Endothelial cell of umbilical vein (primary cell): ENCODE measurements at regions of chr20 and their contacts with region 1.

Region 1: DNA sequence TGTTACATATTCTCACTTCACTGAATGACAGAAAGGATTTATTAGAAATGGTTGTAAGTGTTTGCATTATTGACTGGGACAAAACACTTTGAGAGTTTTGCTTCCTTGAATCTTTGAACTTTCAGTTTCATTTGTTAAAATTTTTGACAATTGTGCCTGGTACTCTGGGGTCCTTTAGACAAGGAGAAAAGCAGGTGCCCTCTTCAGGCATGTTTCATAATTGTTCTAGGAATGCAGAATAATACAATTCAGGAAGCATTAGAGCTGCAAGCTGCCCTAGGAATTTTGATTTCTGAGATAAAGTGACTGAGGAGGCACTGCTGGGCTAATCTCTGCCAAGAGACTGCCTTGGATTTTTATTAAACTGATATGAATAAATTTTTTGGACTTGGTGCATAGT is 49.7 kb downstream of the TOP1 start:
- DNase-seq: peak; percentile 86
- H3K4me3 ChIP-seq: no peak overlapping the region
- H3K27ac ChIP-seq: no peak overlapping the region
- H3K4me1 ChIP-seq: peaks cover 64% of the 10 kb centered on the region
- H3K27me3 ChIP-seq: no peaks in the 10 kb centered on the region
- CTCF ChIP-seq: peak; percentile 49 to 52
- POLR2A ChIP-seq: peak; percentile 52

Region 2: DNA sequence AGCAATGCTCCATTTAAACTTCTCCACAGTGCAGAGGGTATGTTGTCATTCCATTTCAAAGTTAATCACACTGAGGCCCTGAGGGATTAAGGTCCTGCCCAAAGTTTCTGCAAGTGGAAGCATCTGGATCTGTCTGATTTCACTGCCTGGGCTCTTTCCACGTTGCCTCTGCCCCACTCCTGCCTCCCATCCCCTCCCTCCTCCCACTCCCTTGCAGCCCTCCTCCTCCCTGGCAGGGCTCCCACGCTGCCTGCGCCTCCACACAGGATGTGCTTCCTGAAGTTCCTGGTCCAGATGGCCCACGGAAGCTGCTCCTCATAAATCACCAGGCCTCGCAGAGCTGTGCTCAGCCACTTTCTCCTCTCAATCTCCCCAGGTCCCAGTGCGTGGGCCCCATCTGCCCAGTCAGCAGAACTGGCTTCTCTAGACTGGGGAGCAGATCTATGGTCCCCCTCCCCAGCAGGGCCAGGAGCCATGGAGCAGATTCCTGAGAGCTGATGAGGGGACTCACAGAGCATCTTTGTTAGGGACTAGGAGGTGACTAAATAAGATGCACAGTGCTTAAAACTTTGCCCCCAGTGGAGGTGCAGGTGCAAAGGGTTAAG is 323.9 kb before region 1 on chr20:
- CTCF ChIA-PET with region 1: no interaction called
- POLR2A ChIA-PET with region 1: no interaction called
- dilution Hi-C with region 1: no loop called
- intact Hi-C with region 1: loop called (anchors 10 kb)
- DNase-seq: peak; percentile 84
- H3K4me3 ChIP-seq: no peak overlapping the region
- H3K27ac ChIP-seq: no peak overlapping the region
- H3K4me1 ChIP-seq: peaks cover 22% of the 10 kb centered on the region
- H3K27me3 ChIP-seq: no peaks in the 10 kb centered on the region
- CTCF ChIP-seq: no peak
- POLR2A ChIP-seq: no peak

Region 3: DNA sequence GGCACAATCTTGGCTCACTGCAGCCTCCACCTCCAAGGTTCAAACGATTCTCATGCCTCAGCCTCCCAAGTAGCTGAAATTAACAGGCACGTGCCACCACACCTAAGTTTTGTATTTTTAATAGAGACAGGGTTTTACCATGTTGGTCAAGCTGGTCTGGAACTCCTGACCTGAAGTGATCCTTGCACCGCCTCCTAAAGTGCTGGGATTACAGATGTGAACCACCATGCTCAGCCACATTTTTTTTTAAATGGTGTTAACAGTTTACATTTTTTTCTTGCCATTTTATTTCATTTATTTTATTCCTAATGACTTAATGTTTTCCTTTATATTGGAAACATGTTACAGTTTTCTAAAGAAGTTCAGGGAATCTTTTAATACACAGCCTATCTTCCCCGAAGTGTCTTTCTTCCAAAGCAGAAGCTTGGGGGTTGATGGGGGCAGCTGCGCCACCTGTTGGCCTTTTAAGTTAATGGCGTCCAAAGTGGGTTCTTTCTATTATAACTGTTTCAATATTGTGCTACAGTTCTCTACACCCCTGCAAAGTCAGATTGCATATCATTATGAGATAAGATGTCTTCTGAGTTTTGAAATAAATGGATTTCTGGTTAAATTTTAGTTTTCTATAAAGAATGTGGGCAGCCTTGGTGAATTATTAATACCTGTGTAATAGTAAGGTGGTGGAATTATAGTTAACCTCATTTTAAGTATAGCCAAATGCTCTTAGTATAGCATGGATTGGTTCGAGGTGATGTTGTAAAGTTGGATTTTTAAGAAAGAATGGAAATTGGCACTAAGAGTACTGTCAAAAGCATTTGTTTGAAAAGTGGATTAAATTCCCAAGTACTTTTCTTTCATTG is 17.0 kb after region 1 on chr20:
- CTCF ChIA-PET with region 1: interaction called, 14 read pairs
- POLR2A ChIA-PET with region 1: no interaction called
- dilution Hi-C with region 1: no loop called
- intact Hi-C with region 1: no loop called
- DNase-seq: peak; percentile 71
- H3K4me3 ChIP-seq: no peak overlapping the region
- H3K27ac ChIP-seq: no peak overlapping the region
- H3K4me1 ChIP-seq: peaks cover 14% of the 10 kb centered on the region
- H3K27me3 ChIP-seq: no peaks in the 10 kb centered on the region
- CTCF ChIP-seq: peak; percentile 67 to 75
- POLR2A ChIP-seq: no peak

Region 4: GRCh38 chr20:41119546-41120235 is 41.4 kb after region 1 on chr20:
- CTCF ChIA-PET with region 1: no interaction called
- POLR2A ChIA-PET with region 1: no interaction called
- dilution Hi-C with region 1: no loop called
- intact Hi-C with region 1: no loop called
- DNase-seq: no peak
- H3K4me3 ChIP-seq: no peak overlapping the region
- H3K27ac ChIP-seq: no peak overlapping the region
- H3K4me1 ChIP-seq: no peaks in the 10 kb centered on the region
- H3K27me3 ChIP-seq: no peaks in the 10 kb centered on the region
- CTCF ChIP-seq: no peak
- POLR2A ChIP-seq: no peak